MCF 10A (cell line): ENCODE measurements at regions of chr15 and their contacts with region 1.

Region 1: DNA sequence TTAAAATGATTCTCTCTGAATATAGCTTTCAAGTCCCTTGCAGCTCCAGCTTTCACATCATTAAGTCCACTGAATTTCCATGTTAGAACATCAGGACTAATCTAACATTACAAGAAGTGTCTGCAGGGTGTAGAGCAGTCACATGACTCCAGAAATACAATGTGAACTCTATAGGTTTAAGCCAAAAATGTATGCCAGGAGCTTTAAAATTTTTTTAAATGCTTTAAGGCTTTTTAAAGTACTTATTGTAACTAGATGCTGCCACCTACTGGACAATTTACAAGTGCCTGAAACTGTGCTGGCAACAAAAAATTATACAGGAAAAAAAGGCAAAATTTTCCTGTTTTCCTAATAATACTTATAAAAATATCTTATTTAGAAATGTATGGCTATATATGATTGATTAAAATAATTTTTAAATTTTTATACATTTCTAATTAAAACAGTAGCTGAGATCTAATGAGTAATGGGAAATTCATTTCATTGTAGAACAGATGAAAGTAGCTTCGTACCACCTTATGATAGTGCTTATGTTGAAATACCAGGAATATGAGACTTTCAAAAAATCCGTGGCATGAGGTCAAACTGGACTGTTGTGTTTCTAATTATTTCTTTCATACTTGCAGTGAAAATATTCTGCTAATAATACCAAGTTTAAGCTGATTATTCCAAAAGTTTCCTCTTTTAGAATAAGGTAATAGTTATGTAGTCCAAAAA is 25.7 kb downstream of the FSIP1 start:
- DNase-seq: peak; percentile 61
- H3K4me3 Mint-ChIP-seq: no peak overlapping the region
- H3K27ac Mint-ChIP-seq: no peak overlapping the region
- H3K4me1 Mint-ChIP-seq: no peaks in the 10 kb centered on the region
- H3K27me3 Mint-ChIP-seq: no peaks in the 10 kb centered on the region
- CTCF ChIP-seq: peak; percentile 77

Region 2: DNA sequence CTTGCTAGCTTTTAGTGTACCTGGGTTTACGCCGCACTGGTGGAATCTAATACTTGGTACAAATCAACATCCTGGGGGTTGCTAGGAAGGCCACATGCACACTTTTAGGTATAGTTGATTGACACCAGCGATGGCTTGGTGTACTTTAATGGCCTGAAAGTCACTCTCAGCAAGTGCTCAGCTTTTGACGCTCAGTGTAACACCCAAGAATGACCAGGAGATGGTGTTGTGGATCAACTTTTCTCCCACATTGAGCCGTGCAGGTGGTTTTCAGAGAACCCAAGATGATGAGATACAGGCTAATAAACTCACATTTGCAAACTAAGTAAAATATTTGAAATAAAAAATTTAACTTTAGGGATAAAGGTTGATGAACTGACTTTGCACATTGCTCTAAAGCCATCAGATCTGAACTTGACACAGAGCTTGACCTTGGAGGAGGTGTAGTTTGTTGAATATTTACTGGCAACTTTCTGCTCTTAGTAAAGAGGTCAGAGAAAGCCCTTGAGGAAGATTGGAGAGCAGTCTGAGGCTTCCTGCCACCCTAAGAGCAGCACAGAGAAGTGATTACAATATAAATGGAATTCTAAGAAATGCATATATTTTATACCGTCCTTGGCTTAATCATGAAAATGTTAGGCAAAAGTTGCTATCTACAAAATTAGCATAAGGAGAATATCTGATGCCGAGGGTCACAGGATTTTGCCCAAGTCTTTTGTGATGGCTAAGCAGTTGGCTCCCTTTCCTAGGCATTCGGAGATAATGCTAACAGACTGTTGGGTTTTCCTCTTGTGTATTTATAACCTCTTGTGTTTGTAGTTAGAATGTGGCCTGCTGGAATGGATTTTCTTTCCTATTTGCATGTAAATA is 1048.9 kb before region 1 on chr15:
- CTCF ChIA-PET with region 1: interaction called, 6 read pairs
- POLR2A ChIA-PET with region 1: no interaction called
- intact Hi-C with region 1: loop called (anchors 1 kb)
- DNase-seq: peak; percentile 68
- H3K4me3 Mint-ChIP-seq: no peak overlapping the region
- H3K27ac Mint-ChIP-seq: no peak overlapping the region
- H3K4me1 Mint-ChIP-seq: no peaks in the 10 kb centered on the region
- H3K27me3 Mint-ChIP-seq: no peaks in the 10 kb centered on the region
- CTCF ChIP-seq: peak; percentile 76

Region 3: GRCh38 chr15:39530466-39531342 is 226.3 kb before region 1 on chr15:
- CTCF ChIA-PET with region 1: no interaction called
- POLR2A ChIA-PET with region 1: no interaction called
- intact Hi-C with region 1: no loop called
- DNase-seq: no peak
- H3K4me3 Mint-ChIP-seq: no peak overlapping the region
- H3K27ac Mint-ChIP-seq: no peak overlapping the region
- H3K4me1 Mint-ChIP-seq: peaks cover 8% of the 10 kb centered on the region
- H3K27me3 Mint-ChIP-seq: no peaks in the 10 kb centered on the region
- CTCF ChIP-seq: no peak

Region 4: GRCh38 chr15:39665629-39666245 is 91.2 kb before region 1 on chr15:
- CTCF ChIA-PET with region 1: interaction called, 10 read pairs
- POLR2A ChIA-PET with region 1: no interaction called
- intact Hi-C with region 1: no loop called
- DNase-seq: no peak
- H3K4me3 Mint-ChIP-seq: no peak overlapping the region
- H3K27ac Mint-ChIP-seq: no peak overlapping the region
- H3K4me1 Mint-ChIP-seq: peaks cover 11% of the 10 kb centered on the region
- H3K27me3 Mint-ChIP-seq: no peaks in the 10 kb centered on the region
- CTCF ChIP-seq: no peak

Region 5: GRCh38 chr15:39686000-39686613 is 70.9 kb before region 1 on chr15:
- CTCF ChIA-PET with region 1: interaction called, 147 read pairs
- POLR2A ChIA-PET with region 1: interaction called, 9 read pairs
- intact Hi-C with region 1: loop called (anchors 1 kb)
- DNase-seq: peak; percentile 62
- H3K4me3 Mint-ChIP-seq: no peak overlapping the region
- H3K27ac Mint-ChIP-seq: no peak overlapping the region
- H3K4me1 Mint-ChIP-seq: no peaks in the 10 kb centered on the region
- H3K27me3 Mint-ChIP-seq: no peaks in the 10 kb centered on the region
- CTCF ChIP-seq: peak; percentile 67

Region 6: DNA sequence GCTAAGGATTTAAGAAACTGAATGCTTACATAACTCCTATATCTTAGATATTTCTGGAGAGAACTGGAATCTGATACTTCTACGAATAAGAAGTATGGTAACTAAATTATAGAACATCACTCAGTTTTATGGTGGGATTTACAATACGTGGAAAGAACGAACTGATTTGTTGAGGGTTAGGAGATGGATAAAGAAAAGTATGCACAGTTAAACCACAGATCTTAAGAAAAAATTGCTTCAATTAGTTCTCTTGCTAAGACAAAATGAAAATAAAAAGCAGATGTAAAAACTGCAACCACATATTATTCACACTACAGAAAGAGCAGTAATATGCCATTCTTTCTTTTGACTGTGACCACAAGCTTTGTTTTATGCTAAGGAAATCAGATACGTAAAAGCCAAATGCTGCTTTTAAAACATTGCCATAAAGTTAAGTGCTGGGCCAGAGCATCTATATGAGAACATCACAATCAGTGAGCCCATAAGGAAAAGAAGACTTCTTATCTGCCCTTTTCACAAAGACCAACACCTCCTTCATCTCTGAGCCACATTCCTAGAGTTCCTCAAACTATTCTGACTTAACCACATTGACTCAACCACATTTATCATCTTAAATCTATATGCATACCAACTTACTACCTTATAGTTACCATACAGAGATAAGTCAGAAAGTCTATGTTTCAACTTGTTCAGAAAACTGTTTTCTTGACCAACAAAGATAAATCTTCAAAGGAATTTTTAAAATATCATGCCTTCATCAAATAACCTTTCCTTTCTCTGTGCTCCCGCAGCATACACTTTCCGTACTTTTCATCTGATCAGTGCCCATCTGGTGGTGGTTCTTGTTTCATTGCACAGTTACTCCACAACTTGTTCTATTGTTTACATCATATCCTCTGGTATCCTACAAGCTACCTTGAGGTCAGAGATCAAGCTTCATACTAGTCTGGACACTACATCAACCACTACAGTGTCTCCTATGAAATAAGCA is 36.0 kb before region 1 on chr15:
- CTCF ChIA-PET with region 1: interaction called, 11 read pairs
- POLR2A ChIA-PET with region 1: no interaction called
- intact Hi-C with region 1: no loop called
- DNase-seq: no peak
- H3K4me3 Mint-ChIP-seq: no peak overlapping the region
- H3K27ac Mint-ChIP-seq: no peak overlapping the region
- H3K4me1 Mint-ChIP-seq: peaks cover 16% of the 10 kb centered on the region
- H3K27me3 Mint-ChIP-seq: no peaks in the 10 kb centered on the region
- CTCF ChIP-seq: no peak

Region 7: DNA sequence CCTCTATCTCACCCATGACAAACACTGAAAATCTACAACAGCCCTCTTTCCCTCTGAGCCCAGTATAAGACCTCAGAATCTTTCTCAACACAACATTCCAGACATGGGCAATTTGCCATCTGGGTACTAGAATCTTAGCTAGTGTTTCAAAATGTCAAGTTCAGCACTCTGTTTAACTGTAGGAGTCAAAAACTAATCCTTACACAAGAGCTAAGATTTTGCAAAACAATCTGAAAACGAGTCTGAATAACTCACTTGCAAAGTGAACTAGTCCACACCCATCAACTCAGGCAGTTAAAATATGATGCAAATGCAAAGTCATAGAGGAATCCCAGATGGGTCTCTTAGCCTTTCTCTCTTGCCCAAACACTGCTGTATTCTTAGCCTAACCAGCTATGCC is 95.3 kb after region 1 on chr15:
- CTCF ChIA-PET with region 1: no interaction called
- POLR2A ChIA-PET with region 1: no interaction called
- intact Hi-C with region 1: no loop called
- DNase-seq: peak; percentile 51
- H3K4me3 Mint-ChIP-seq: no peak overlapping the region
- H3K27ac Mint-ChIP-seq: no peak overlapping the region
- H3K4me1 Mint-ChIP-seq: peaks cover 5% of the 10 kb centered on the region
- H3K27me3 Mint-ChIP-seq: no peaks in the 10 kb centered on the region
- CTCF ChIP-seq: no peak

Region 8: DNA sequence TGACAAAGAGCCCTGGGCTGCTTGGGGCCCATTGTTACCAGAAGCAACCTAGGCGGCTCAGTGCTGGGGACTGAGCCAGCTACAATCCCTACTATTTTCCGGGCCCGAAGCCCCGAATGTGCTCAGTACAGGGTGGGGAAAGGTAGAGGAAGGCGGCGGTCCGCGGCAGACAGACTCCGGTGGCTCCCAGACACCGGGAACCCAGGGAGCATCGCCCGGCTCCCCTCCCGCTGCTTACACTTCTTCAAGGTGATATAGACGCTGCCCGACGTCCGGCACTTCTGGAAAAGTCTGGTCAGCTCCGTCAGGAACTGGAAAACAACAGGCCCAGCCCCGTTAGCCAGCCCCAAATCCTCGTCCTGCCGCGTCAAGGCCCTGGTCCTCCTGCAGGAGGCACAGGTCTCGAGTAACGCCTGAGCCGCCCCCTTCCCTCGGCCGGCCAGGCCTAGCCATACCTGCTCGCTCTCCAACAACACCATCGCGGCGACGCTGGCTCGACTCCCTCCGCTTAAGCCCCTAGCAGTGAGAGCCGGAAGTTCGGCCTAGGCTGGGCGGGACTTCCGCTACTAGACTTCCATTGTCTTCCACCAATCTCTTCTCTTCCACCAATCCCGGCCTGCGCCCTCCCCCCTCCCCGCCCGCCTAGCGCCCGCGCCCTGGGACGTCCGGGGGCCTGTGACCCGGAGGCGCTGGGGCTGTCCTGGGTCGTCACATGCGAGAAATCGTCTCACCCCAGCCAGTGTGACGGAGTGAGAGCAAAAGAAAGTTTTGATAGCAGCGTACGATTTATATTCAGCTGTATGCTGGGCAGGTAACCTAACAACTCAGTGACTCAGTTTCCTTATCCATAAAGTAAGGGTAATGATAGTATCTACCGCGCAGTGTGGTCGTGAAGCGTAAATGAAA is 281.9 kb after region 1 on chr15 and contains the start of gene SRP14:
- CTCF ChIA-PET with region 1: no interaction called
- POLR2A ChIA-PET with region 1: no interaction called
- intact Hi-C with region 1: no loop called
- DNase-seq: peak; percentile 93
- H3K4me3 Mint-ChIP-seq: peak within 1 kb of the TSS; percentile 92
- H3K27ac Mint-ChIP-seq: peak within 1 kb of the TSS; percentile 97
- H3K4me1 Mint-ChIP-seq: peaks cover 9% of the 10 kb centered on the region
- H3K27me3 Mint-ChIP-seq: no peaks in the 10 kb centered on the region
- CTCF ChIP-seq: no peak
- total RNA-seq, gene SRP14: 165 and 203 TPM in 2 replicates